ENCODE measurements at regions of chr1 and their contacts with region 1.

Region 1: GRCh38 chr1:202315576-202316168 is 26.1 kb downstream of the UBE2T start:
- DNase-seq: peak; percentile 51 to 84 (median 77)
- ATAC-seq: peak; percentile 93
- H3K4me3 ChIP-seq: no peak overlapping the region
- H3K4me3 Mint-ChIP-seq: no peak overlapping the region
- H3K27ac ChIP-seq: no peak overlapping the region
- H3K27ac Mint-ChIP-seq: no peak overlapping the region
- H3K4me1 ChIP-seq: no peaks in the 10 kb centered on the region
- H3K4me1 Mint-ChIP-seq: no peaks in the 10 kb centered on the region
- H3K27me3 ChIP-seq: no peaks in the 10 kb centered on the region
- H3K27me3 Mint-ChIP-seq: peaks cover 3% of the 10 kb centered on the region
- CTCF ChIP-seq: peak; percentile 92

Region 2: DNA sequence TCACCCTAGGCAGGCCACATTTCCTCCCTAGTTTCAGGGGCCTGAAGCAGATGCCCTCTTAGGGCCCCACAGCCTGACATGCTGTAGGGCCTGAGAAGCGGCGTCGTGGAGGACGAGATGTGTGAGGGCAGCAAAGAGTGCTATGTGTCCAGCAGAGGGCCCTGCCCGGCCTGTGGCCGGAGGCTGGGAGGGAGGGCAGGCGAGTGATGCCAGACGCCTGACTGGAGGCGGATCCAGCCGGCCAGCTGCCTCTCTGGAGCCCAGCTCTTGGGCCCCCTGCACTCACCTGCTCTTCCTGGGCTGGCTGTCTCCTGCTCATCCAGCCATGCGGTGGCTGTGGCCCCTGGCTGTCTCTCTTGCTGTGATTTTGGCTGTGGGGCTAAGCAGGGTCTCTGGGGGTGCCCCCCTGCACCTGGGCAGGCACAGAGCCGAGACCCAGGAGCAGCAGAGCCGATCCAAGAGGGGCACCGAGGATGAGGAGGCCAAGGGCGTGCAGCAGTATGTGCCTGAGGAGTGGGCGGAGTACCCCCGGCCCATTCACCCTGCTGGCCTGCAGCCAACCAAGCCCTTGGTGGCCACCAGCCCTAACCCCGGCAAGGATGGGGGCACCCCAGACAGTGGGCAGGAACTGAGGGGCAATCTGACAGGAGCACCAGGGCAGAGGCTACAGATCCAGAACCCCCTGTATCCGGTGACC is 192.9 kb before region 1 on chr1 and contains the start of gene GPR37L1:
- CTCF ChIA-PET with region 1: no interaction called
- POLR2A ChIA-PET with region 1: no interaction called
- intact Hi-C with region 1: no loop called
- DNase-seq: no peak
- ATAC-seq: no peak
- H3K4me3 ChIP-seq: no peak within 1 kb of the TSS
- H3K4me3 Mint-ChIP-seq: no peak within 1 kb of the TSS
- H3K27ac ChIP-seq: no peak within 1 kb of the TSS
- H3K27ac Mint-ChIP-seq: no peak within 1 kb of the TSS
- H3K4me1 ChIP-seq: no peaks in the 10 kb centered on the region
- H3K4me1 Mint-ChIP-seq: no peaks in the 10 kb centered on the region
- H3K27me3 ChIP-seq: no peaks in the 10 kb centered on the region
- H3K27me3 Mint-ChIP-seq: peaks cover 20% of the 10 kb centered on the region
- CTCF ChIP-seq: no peak
- total RNA-seq, gene GPR37L1: not detected

Region 3: GRCh38 chr1:202184750-202185460 is 130.8 kb before region 1 on chr1:
- CTCF ChIA-PET with region 1: interaction called, 82 read pairs
- POLR2A ChIA-PET with region 1: no interaction called
- intact Hi-C with region 1: loop called in 1 of 2 experiments (anchors 1 kb)
- DNase-seq: peak; percentile 24 to 80 (median 70)
- ATAC-seq: peak; percentile 61
- H3K4me3 ChIP-seq: no peak overlapping the region
- H3K4me3 Mint-ChIP-seq: no peak overlapping the region
- H3K27ac ChIP-seq: no peak overlapping the region
- H3K27ac Mint-ChIP-seq: no peak overlapping the region
- H3K4me1 ChIP-seq: peaks cover 13% of the 10 kb centered on the region
- H3K4me1 Mint-ChIP-seq: peaks cover 13% of the 10 kb centered on the region
- H3K27me3 ChIP-seq: no peaks in the 10 kb centered on the region
- H3K27me3 Mint-ChIP-seq: peaks cover 2% of the 10 kb centered on the region
- CTCF ChIP-seq: peak; percentile 64

Region 4: GRCh38 chr1:202235856-202236837 is 79.5 kb before region 1 on chr1:
- CTCF ChIA-PET with region 1: no interaction called
- POLR2A ChIA-PET with region 1: no interaction called
- intact Hi-C with region 1: loop called (anchors 1 to 2 kb)
- DNase-seq: peak; percentile 34 to 76 (median 66)
- ATAC-seq: peak; percentile 89
- H3K4me3 ChIP-seq: no peak overlapping the region
- H3K4me3 Mint-ChIP-seq: no peak overlapping the region
- H3K27ac ChIP-seq: no peak overlapping the region
- H3K27ac Mint-ChIP-seq: no peak overlapping the region
- H3K4me1 ChIP-seq: no peaks in the 10 kb centered on the region
- H3K4me1 Mint-ChIP-seq: no peaks in the 10 kb centered on the region
- H3K27me3 ChIP-seq: no peaks in the 10 kb centered on the region
- H3K27me3 Mint-ChIP-seq: peaks cover 12% of the 10 kb centered on the region
- CTCF ChIP-seq: peak; percentile 76

Region 5: GRCh38 chr1:202283379-202283844 is 32.3 kb before region 1 on chr1:
- CTCF ChIA-PET with region 1: interaction called, 38 read pairs
- POLR2A ChIA-PET with region 1: no interaction called
- intact Hi-C with region 1: no loop called
- DNase-seq: peak in 4 of 9 experiments; percentile 17 to 55 (median 36)
- ATAC-seq: peak; percentile 48
- H3K4me3 ChIP-seq: no peak overlapping the region
- H3K4me3 Mint-ChIP-seq: no peak overlapping the region
- H3K27ac ChIP-seq: no peak overlapping the region
- H3K27ac Mint-ChIP-seq: peak overlapping the region; percentile 7
- H3K4me1 ChIP-seq: peaks cover 15% of the 10 kb centered on the region
- H3K4me1 Mint-ChIP-seq: peaks cover 18% of the 10 kb centered on the region
- H3K27me3 ChIP-seq: no peaks in the 10 kb centered on the region
- H3K27me3 Mint-ChIP-seq: no peaks in the 10 kb centered on the region
- CTCF ChIP-seq: no peak

Region 6: DNA sequence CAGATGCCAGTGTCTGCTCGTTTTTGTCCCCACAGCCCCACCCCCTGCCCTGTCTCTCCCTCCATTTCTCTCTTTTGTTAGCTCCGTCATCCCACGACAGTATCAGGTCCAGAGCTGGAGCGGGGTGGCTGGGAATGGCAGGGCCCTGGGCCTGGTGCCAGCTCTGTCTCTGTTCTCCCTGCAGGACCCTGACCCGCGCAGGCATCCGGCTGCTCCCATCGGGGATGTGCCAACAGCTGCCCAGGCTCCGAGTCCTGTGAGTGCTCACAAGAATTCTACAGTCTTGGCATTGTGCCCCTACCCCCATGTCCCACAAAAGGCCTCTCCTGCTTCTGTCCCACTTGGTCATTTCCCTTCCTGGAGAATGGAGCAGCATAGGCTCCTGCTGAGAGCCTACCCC is 11.3 kb before region 1 on chr1:
- CTCF ChIA-PET with region 1: interaction called, 22 read pairs
- POLR2A ChIA-PET with region 1: no interaction called
- intact Hi-C with region 1: no loop called
- DNase-seq: no peak
- ATAC-seq: no peak
- H3K4me3 ChIP-seq: no peak overlapping the region
- H3K4me3 Mint-ChIP-seq: no peak overlapping the region
- H3K27ac ChIP-seq: no peak overlapping the region
- H3K27ac Mint-ChIP-seq: no peak overlapping the region
- H3K4me1 ChIP-seq: no peaks in the 10 kb centered on the region
- H3K4me1 Mint-ChIP-seq: no peaks in the 10 kb centered on the region
- H3K27me3 ChIP-seq: no peaks in the 10 kb centered on the region
- H3K27me3 Mint-ChIP-seq: no peaks in the 10 kb centered on the region
- CTCF ChIP-seq: no peak

Region 7: GRCh38 chr1:202355944-202356553 is 40.4 kb after region 1 on chr1:
- CTCF ChIA-PET with region 1: no interaction called
- POLR2A ChIA-PET with region 1: no interaction called
- intact Hi-C with region 1: no loop called
- DNase-seq: no peak
- ATAC-seq: no peak
- H3K4me3 ChIP-seq: no peak overlapping the region
- H3K4me3 Mint-ChIP-seq: no peak overlapping the region
- H3K27ac ChIP-seq: no peak overlapping the region
- H3K27ac Mint-ChIP-seq: no peak overlapping the region
- H3K4me1 ChIP-seq: no peaks in the 10 kb centered on the region
- H3K4me1 Mint-ChIP-seq: peaks cover 25% of the 10 kb centered on the region
- H3K27me3 ChIP-seq: no peaks in the 10 kb centered on the region
- H3K27me3 Mint-ChIP-seq: no peaks in the 10 kb centered on the region
- CTCF ChIP-seq: no peak

Region 8: GRCh38 chr1:202405928-202406327 is 90.3 kb after region 1 on chr1:
- CTCF ChIA-PET with region 1: no interaction called
- POLR2A ChIA-PET with region 1: no interaction called
- intact Hi-C with region 1: no loop called
- DNase-seq: no peak
- ATAC-seq: no peak
- H3K4me3 ChIP-seq: no peak overlapping the region
- H3K4me3 Mint-ChIP-seq: no peak overlapping the region
- H3K27ac ChIP-seq: no peak overlapping the region
- H3K27ac Mint-ChIP-seq: no peak overlapping the region
- H3K4me1 ChIP-seq: no peaks in the 10 kb centered on the region
- H3K4me1 Mint-ChIP-seq: peaks cover 4% of the 10 kb centered on the region
- H3K27me3 ChIP-seq: no peaks in the 10 kb centered on the region
- H3K27me3 Mint-ChIP-seq: no peaks in the 10 kb centered on the region
- CTCF ChIP-seq: no peak

Measured in CD8-positive, alpha-beta T cell (primary cell).